CD4-positive, alpha-beta memory T cell (primary cell): ENCODE measurements at regions of chr17 and their contacts with region 1.

Region 1: GRCh38 chr17:31524926-31525800 is 133.7 kb downstream of the RAB11FIP4 start:
- DNase-seq: peak; percentile 73 to 82 (median 76)
- H3K4me3 ChIP-seq: no peak overlapping the region
- H3K4me3 Mint-ChIP-seq: no peak overlapping the region
- H3K27ac ChIP-seq: no peak overlapping the region
- H3K27ac Mint-ChIP-seq: no peak overlapping the region
- H3K4me1 ChIP-seq: peaks cover 4% of the 10 kb centered on the region
- H3K4me1 Mint-ChIP-seq: peaks cover 0 to 3% (median under 1%) of the 10 kb centered on the region in 4 donors
- H3K27me3 ChIP-seq: no peaks in the 10 kb centered on the region
- H3K27me3 Mint-ChIP-seq: no peaks in the 10 kb centered on the region

Region 2: GRCh38 chr17:31388770-31389661 is 136.1 kb before region 1 on chr17:
- CTCF ChIA-PET with region 1: interaction called, 47 read pairs
- POLR2A ChIA-PET with region 1: interaction called, 3 read pairs
- intact Hi-C with region 1: loop called (anchors 1 kb)
- DNase-seq: peak in 4 of 5 donors; percentile 21 to 40 (median 32)
- H3K4me3 ChIP-seq: no peak overlapping the region
- H3K4me3 Mint-ChIP-seq: no peak overlapping the region
- H3K27ac ChIP-seq: no peak overlapping the region
- H3K27ac Mint-ChIP-seq: no peak overlapping the region
- H3K4me1 ChIP-seq: peaks cover 9% of the 10 kb centered on the region
- H3K4me1 Mint-ChIP-seq: peaks cover 2 to 23% (median 5%) of the 10 kb centered on the region in 4 donors
- H3K27me3 ChIP-seq: peaks cover 8% of the 10 kb centered on the region
- H3K27me3 Mint-ChIP-seq: peaks cover 15 to 23% of the 10 kb centered on the region in 2 donors

Region 3: DNA sequence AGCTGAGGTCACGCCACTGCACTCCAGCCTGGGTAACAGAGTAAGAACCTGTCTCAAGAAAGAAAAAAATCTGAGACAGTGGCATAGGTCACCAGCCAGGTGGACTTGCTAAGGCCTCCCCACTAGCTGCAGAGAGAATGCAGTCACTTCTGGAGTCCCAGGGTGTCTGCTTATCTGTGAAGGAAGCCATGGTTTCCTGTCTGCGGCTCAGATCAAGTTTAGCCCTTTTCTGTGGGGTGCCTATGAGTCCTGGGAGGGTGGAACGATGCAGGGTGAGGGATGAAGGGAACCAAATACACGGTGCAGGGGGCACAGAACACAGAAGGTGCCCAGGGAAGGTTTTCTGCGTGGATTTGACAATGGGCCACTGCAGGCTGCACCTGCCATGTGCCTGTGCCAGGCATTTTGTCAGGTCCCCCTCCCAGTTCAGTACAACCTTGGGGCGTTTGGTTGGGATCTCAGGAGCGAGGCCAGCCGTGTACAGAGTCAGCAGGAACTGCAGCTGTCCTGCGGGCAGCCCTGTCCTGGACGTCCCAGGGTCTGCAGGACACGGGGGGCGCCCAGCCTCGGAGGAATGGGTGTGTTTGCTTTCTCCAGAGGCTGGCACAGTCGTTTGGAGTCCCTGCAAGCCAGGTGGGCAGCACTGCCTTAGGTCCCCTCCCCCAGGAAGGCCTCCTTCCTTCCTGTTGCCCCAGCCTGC is 91.9 kb before region 1 on chr17:
- CTCF ChIA-PET with region 1: interaction called, 184 read pairs
- POLR2A ChIA-PET with region 1: interaction called, 9 read pairs
- intact Hi-C with region 1: loop called (anchors 1 kb)
- DNase-seq: peak; percentile 36 to 74 (median 46)
- H3K4me3 ChIP-seq: no peak overlapping the region
- H3K4me3 Mint-ChIP-seq: peak overlapping the region in 5 of 8 donors; percentile 37 to 82 (median 55)
- H3K27ac ChIP-seq: no peak overlapping the region
- H3K27ac Mint-ChIP-seq: peak overlapping the region in 1 of 7 donors; percentile 82
- H3K4me1 ChIP-seq: peaks cover 18% of the 10 kb centered on the region
- H3K4me1 Mint-ChIP-seq: peaks cover 10 to 26% (median 17%) of the 10 kb centered on the region in 4 donors
- H3K27me3 ChIP-seq: no peaks in the 10 kb centered on the region
- H3K27me3 Mint-ChIP-seq: peaks cover 6 to 12% of the 10 kb centered on the region in 2 donors

Region 4: DNA sequence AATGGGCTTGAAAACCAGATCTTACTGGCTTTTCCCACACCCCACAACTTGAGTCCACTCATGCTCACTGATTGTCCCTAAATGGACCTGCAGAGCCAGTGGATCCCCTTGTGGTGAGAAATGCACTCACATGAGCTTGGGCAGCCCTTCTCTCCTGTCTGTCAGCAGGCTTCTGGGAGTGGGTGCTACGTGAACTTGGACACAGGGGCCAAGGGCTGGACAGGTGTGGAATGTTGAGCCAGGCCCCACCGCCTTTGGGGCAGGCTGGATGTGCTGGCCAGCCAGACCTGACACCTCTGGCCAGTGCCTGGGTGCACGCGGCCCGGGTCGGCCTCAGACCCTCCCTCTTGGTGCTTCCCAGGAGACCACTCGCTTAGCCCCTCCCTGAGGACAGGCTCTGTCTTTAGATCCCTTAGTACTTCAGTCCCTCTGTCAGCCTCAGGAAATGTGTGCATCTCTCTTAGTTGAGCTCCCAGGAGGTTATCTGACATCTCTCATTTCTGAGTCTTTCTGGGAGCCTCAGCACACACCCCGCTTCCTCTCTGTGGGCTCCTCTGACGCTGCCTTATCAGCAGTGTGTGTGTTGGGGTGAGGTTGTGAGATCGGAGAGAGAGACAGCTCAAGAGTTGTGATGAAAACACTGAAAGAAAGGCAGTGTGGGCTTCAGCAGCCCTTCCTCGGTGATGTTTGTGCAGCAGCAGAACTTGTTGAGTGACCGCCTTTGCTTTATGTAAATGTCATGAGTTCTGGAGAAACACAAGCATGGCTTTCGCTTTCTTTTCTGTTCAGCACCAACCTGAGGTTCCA is 16.7 kb before region 1 on chr17:
- CTCF ChIA-PET with region 1: interaction called, 43 read pairs
- POLR2A ChIA-PET with region 1: interaction called, 11 read pairs
- intact Hi-C with region 1: loop called (anchors 2 kb)
- DNase-seq: peak; percentile 80 to 91 (median 85)
- H3K4me3 ChIP-seq: peak overlapping the region; percentile 42 to 72
- H3K4me3 Mint-ChIP-seq: peak overlapping the region; percentile 87 to 98 (median 94)
- H3K27ac ChIP-seq: peak overlapping the region; percentile 72
- H3K27ac Mint-ChIP-seq: peak overlapping the region; percentile 95 to 99 (median 98)
- H3K4me1 ChIP-seq: peaks cover 58% of the 10 kb centered on the region
- H3K4me1 Mint-ChIP-seq: peaks cover 39 to 73% (median 54%) of the 10 kb centered on the region in 4 donors
- H3K27me3 ChIP-seq: no peaks in the 10 kb centered on the region
- H3K27me3 Mint-ChIP-seq: no peaks in the 10 kb centered on the region